ENCODE measurements at regions of chr17 and their contacts with region 1.

Region 1: DNA sequence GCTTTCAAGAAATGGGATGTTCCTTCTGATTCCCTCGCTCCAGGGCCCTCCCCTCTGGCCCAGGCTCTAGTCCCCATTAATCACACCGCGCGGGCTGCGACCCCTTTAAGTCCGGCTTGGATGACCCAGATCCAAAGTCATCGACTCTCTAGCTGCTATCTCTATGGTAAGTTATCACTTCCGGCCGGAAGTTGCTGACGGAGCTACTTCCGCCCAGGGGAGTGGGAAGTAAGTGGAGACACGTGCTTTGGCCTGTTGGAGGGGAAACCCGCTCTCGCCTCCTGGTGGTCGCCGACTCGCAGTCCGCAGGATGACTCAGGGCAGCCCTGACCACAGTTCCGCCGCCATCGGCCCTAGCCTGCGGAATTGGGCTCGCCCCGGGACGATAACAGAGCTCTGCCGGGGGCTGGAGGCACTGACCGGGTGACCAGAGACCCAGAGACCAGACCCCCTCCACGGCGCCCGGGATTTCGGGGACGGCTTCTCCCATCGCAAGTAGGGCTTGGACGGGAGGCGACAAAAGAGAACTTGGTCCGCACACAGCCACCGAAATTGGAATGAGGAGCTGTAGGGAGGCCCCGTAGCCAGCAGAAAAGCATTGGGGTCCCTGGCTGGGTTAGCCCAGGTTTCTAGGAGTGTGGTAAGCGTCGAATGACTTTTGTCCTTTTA is 52.2 kb upstream of the SEC14L1 start:
- DNase-seq: peak; percentile 89
- H3K4me3 ChIP-seq: peak overlapping the region; percentile 62
- H3K27me3 ChIP-seq: peaks cover 1% of the 10 kb centered on the region; the same call in 1 of the 2 replicates
- CTCF ChIP-seq: peak; percentile 89

Region 2: DNA sequence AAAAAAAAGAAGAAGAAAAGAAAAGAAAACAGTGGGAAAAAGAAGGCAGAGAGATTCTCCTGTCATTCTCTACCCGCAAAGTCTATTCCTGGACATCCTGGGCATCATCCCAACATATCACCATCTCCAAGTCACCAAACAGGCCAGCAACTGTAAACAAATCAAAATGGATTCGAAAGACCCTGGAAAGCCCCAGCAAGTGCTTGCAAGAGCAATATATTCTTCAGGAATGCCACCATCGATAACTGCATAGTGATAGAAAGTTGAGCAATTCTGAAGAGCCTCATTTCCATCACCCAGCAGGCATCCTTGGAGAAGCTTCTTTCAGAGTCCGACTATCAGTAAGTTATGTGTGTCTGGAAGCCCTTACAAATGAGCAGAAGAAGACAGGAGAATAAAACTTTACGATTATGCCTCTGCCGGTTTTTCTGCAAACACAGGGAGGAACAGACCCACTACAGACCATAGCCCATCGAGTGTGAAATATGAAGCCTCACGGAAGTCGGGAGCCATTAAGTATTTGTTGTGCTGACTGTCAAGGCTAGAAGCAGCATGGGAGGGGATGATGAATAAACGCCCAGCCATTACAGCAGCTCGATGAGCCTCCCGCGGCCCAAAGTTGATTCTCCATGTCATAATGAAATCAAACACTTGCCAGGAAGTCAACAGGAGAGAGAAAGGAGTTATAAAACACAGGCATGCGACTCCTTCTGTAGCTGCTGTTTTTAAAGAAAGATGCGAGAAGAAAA is 12.3 kb before region 1 on chr17:
- CTCF ChIA-PET with region 1: interaction called, 22 read pairs
- POLR2A ChIA-PET with region 1: no interaction called
- DNase-seq: no peak
- H3K4me3 ChIP-seq: no peak overlapping the region
- H3K27me3 ChIP-seq: peaks cover 21% of the 10 kb centered on the region
- CTCF ChIP-seq: no peak

Region 3: DNA sequence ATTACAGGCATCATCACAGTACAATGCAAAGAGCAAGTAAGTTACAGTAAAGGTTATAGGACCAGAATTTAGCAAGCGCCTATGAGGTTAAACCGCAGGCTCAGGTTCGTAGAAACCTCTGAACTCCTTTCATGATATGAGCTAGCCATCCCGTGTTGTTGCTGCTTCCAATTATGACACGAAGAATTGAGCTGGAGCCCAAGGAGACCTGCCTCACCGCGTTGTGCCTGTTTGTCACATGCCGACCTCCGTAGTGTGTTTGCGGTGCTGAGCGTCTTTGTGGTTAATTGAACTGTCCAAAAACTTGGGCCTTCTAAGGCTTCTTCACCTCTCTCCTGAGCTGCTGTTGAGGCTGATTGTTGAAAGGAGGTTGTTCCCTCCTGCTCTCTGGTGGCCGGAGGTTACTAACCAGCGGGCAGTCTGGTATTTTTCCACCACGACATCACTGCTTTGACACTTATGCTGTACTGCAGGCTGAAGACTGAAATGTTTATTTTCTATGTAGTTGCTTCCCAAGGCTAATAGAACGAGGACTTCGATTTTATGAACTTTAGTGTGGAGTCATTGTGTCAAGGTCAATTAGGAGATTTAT is 119.7 kb after region 1 on chr17:
- CTCF ChIA-PET with region 1: interaction called, 22 read pairs
- POLR2A ChIA-PET with region 1: no interaction called
- DNase-seq: peak; percentile 33
- H3K4me3 ChIP-seq: no peak overlapping the region
- H3K27me3 ChIP-seq: no peaks in the 10 kb centered on the region
- CTCF ChIP-seq: peak; percentile 43

Region 4: DNA sequence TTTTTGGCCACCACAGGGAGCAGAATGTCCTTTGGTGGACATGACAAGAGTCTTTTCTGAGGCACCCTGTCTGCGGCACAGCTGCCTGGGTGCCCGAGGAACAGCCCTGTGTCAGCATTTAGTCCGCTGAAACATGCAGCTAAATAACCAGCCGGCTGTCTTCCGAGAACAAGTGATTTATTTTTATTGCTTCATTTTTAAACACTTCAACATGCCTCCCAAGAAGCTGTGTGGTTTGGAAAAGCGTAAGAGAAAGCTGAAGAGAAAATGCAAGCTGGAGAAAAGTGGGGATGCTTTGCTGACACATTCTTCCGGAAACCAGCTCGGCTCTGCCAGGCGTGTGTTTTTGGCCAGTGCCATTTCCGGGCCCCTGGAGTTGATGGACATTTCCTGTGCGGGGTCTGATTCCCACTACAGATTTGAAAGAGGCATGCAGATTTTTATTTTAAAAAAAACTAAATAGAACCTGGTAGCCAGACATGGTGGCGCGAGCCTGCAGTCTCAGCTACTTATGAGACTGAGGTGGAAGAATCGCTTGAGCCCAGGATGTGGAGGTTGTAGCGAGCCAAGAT is 146.9 kb after region 1 on chr17:
- CTCF ChIA-PET with region 1: interaction called, 27 read pairs
- POLR2A ChIA-PET with region 1: no interaction called
- DNase-seq: peak; percentile 59
- H3K4me3 ChIP-seq: peak overlapping the region; percentile 20
- H3K27me3 ChIP-seq: no peaks in the 10 kb centered on the region
- CTCF ChIP-seq: no peak

Region 5: GRCh38 chr17:77247048-77247541 is 158.5 kb after region 1 on chr17:
- CTCF ChIA-PET with region 1: interaction called, 89 read pairs
- POLR2A ChIA-PET with region 1: no interaction called
- DNase-seq: no peak
- H3K4me3 ChIP-seq: peak overlapping the region; percentile 64
- H3K27me3 ChIP-seq: no peaks in the 10 kb centered on the region
- CTCF ChIP-seq: peak; percentile 81

Measured in BJ (cell line).